Ascending aorta (tissue), 2 donors: ENCODE measurements at regions of chr11 and their contacts with region 1.

Region 1: DNA sequence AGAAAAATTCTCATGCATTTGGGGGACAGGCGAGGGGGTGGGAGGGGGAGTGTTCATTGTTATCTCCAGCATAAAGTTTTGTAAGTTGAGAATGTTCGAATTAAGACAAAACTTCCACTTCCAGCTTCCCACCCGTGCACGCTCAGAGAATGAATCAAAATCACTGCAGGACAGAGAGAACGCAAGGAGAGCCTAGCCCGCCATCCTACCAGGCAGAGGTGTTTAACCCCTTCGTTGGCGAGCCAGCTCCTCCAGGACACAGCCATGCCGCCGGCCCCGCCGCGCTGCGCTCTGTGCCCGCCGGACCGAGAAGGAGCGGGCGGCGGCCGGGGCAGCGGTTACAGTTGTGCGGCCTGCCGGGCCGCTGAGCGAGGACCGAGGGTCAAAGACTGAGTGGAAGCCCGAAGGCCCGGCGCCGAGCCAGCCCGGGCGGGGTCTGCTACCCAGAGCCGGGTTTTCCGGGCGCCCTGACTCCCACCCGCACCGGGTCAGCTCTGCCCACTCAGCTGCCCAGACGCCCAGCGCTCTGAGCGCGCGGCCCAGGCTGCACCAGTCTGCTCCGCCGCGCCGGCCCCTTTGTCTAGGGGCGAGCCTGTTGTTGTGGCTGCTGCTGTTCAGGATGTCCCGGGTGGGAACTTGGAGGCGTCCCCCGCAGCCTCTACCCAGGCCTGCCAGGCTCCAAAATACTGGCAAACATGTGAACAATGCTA is at the start of gene NOX4:
- DNase-seq: peak; percentile 12 to 84
- H3K4me3 ChIP-seq: peak within 1 kb of the TSS; percentile 58 to 64
- H3K27ac ChIP-seq: peak within 1 kb of the TSS; percentile 90 to 92
- H3K4me1 ChIP-seq: peaks cover 0 to 24% of the 10 kb centered on the region in 2 donors
- H3K27me3 ChIP-seq: no peaks in the 10 kb centered on the region
- CTCF ChIP-seq: no peak
- total RNA-seq, gene NOX4: 125 TPM

Region 2: GRCh38 chr11:89347071-89347470 is 144.1 kb before region 1 on chr11:
- intact Hi-C with region 1: loop called (anchors 5 kb)
- DNase-seq: no peak
- H3K4me3 ChIP-seq: no peak overlapping the region
- H3K27ac ChIP-seq: no peak overlapping the region
- H3K4me1 ChIP-seq: peaks cover 0 to 18% of the 10 kb centered on the region in 2 donors
- H3K27me3 ChIP-seq: no peaks in the 10 kb centered on the region
- CTCF ChIP-seq: no peak

Region 3: DNA sequence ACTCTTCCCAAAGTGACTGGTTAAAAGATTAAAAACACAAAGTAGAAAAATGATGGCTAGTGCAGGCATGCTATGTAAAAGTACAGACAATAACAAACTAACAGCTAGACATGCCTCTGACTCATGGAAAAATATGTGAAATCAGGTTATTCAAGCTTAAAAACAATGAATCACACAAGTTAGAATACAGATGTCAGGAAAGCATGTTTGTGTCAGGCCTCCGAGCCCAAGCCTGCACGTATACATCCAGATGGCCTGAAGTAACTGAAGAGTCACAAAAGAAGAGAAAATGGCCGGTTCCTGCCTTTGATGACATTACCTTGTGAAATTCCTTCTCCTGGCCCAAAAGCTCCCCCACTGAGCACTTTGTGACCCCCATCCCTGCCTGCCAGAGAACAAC is 110.0 kb before region 1 on chr11:
- intact Hi-C with region 1: loop called (anchors 5 kb)
- DNase-seq: peak; percentile 14 to 83
- H3K4me3 ChIP-seq: no peak overlapping the region
- H3K27ac ChIP-seq: peak overlapping the region; percentile 86 to 89
- H3K4me1 ChIP-seq: peaks cover 5 to 27% of the 10 kb centered on the region in 2 donors
- H3K27me3 ChIP-seq: no peaks in the 10 kb centered on the region
- CTCF ChIP-seq: no peak

Region 4: GRCh38 chr11:89536926-89537325 is 45.8 kb after region 1 on chr11:
- intact Hi-C with region 1: loop called (anchors 5 kb)
- DNase-seq: no peak
- H3K4me3 ChIP-seq: no peak overlapping the region
- H3K27ac ChIP-seq: peak overlapping the region; percentile 67 to 68
- H3K4me1 ChIP-seq: peaks cover 2 to 21% of the 10 kb centered on the region in 2 donors
- H3K27me3 ChIP-seq: no peaks in the 10 kb centered on the region
- CTCF ChIP-seq: no peak

Region 5: GRCh38 chr11:89613911-89614310 is 122.8 kb after region 1 on chr11:
- intact Hi-C with region 1: loop called (anchors 2 kb)
- DNase-seq: no peak
- H3K4me3 ChIP-seq: peak overlapping the region; percentile 7 to 29
- H3K27ac ChIP-seq: no peak overlapping the region
- H3K4me1 ChIP-seq: peaks cover 3 to 4% of the 10 kb centered on the region in 2 donors
- H3K27me3 ChIP-seq: no peaks in the 10 kb centered on the region
- CTCF ChIP-seq: no peak